ENCODE measurements at regions of chr6 and their contacts with region 1.

Region 1: GRCh38 chr6:3125815-3126214 is 7.3 kb downstream of the BPHL start:
- DNase-seq: no peak
- ATAC-seq: no peak

Region 2: GRCh38 chr6:3176562-3177355 is 50.9 kb after region 1 on chr6:
- intact Hi-C with region 1: no loop called
- DNase-seq: no peak
- ATAC-seq: peak; percentile 29

Region 3: DNA sequence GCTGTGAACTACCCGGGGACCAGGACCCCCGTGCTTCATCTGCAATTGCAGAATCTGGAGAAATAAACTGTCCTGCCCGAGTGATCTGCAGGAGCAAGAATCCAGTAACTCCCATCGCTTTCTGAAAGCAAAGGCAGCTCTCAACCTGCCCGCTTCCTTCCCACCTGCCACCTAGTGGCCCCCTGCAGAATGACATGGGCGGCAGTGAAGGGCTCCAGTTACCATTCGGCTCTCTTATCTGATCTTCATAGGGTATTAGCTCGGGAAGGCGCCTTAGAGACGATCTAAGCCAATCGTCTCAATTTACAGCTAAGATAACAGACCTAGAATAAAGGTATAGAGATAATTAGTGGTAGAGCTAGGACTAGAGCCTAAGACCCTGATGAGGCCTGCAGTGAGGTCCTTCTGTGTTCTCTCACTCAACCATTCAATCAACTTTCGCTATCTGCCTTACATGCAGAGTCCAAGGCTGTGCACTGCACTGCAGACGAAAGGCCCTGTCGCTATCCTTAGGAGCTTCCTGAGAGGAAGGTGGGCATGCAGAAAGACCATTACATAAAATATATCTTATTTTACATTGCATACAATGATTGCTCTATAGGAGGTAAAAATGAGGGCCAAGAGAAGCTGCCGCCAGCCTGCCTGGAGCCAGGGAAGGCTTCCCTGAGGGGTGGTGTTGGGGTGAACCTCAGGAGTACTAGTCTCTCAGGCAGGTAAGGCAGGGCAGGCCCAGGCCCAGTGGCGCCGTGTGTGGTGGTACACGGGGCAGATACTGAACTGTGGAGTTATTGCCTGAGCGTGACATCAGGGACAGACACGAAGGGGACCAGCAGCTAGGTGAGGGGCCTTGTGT is 125.9 kb after region 1 on chr6:
- intact Hi-C with region 1: loop called (anchors 2 kb)
- DNase-seq: peak; percentile 86
- ATAC-seq: peak; percentile 89

Region 4: DNA sequence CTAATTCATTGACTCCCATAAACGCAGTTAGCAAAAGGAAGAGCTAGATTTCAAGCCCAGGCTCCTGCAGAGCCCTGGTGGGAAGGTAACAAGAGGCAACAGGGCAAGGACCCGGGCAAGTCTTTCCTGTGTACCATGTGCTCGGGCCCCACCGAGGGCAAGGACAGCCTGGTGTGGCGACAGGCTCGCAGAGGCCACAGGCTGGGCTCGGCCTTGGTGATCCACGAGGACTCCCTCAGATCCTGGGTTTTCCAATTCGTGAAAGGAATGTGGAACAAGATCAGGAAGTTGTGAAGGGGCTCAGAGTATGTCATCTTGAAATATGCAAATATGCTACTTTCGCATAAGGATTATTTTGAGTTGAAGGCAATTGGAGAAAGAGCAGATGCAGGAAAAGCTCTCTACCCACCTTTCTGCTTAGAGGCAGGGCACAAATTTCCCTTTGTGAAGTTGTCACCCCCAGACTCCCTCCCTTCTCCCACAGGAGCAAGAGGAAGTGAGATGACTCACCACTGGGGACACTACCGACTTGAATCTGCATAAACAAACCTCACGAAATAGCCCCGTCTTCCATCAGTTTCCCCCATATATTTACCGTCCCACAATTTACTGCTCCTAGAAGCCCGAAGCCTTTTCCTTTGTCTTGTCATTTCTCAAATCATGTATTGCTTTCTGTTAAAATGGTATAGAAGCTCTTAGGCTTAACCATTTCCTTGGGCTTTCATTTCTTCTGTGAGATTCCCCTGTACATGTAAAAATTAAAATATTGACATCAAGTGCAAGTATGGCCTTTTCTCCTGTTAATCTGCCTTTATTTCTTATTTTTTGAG is 211.9 kb after region 1 on chr6:
- intact Hi-C with region 1: no loop called
- DNase-seq: no peak
- ATAC-seq: peak; percentile 37

Region 5: DNA sequence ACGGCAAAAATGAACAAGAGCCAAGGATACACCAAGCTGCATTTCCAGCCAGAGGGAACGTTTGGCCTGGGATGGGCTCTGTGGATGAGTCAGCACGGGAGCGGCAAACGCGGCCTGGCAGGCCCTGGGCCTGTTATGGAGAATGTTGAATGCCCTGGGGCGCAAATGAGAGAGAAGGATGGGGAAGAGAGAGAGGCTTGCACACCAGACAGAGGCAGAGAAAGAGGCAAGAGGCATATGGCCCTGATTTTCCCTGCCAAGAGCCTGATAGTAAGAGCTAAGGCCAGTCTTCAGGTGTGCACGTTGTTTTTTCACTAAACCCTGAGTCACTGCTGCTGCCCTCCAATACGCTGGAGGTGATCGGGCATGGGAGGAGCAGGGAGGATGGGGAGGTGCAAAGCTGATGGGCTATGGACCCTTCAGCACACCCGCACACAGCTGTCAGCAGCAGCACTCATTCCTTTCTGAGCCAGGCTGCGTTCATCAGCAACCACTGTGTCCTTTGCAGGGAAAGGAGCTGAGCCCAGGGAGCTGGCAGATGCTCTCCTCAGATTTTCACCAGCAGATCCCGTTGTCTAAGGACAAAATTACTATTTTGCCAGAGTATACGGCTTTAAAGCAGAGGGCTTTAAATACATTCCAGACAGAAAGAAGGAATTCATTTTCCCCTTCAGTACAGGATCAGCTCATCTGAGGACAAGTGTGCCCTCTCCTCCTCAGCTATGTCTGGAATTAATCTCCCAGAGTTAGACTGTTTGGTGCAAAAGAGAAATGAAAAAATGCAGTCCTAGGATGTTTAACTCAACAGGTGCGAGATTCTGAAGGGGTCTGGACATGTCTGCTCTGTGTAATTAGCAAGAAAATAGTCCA is 392.8 kb after region 1 on chr6:
- intact Hi-C with region 1: no loop called
- DNase-seq: no peak
- ATAC-seq: no peak

Region 6: GRCh38 chr6:3732345-3733141 is 606.7 kb after region 1 on chr6:
- intact Hi-C with region 1: loop called (anchors 10 kb)
- DNase-seq: peak; percentile 78
- ATAC-seq: peak; percentile 83